ENCODE measurements at regions of chr3 and their contacts with region 1.

Region 1: DNA sequence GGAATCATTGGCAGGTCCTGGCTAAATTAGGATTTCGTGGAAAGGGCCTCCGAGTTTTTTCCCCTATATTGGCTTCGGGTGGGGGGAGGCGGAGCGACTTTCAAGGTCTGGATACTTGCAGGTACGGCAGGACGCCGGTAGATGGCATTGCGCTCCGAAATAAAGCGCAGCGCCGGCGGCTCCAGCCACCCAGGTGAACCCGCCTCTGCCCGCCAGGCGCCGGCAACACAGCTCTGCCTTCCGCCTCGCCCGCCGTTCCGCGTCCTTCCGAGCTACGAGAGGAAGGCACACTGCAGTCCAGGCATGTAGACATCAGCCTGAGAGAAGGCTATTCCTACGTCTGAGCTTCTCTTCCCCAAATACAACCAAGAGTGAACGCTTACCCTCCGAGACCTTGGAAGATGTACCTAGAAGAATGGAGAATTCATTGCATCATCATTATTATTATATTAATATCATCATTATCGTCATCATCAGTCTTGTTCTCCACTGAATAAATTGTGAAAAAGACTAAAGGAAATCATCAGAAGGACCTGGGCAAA is 514.1 kb downstream of the MECOM start:
- DNase-seq: peak; percentile 86
- H3K4me3 Mint-ChIP-seq: peak overlapping the region; percentile 81
- H3K27ac Mint-ChIP-seq: no peak overlapping the region
- H3K4me1 Mint-ChIP-seq: peaks cover 9% of the 10 kb centered on the region
- H3K27me3 Mint-ChIP-seq: no peaks in the 10 kb centered on the region
- CTCF ChIP-seq: peak; percentile 73

Region 2: GRCh38 chr3:169041677-169042171 is 107.7 kb before region 1 on chr3:
- CTCF ChIA-PET with region 1: interaction called, 28 read pairs
- POLR2A ChIA-PET with region 1: interaction called, 7 read pairs
- intact Hi-C with region 1: loop called (anchors 2 kb)
- DNase-seq: peak; percentile 46
- H3K4me3 Mint-ChIP-seq: no peak overlapping the region
- H3K27ac Mint-ChIP-seq: peak overlapping the region; percentile 7
- H3K4me1 Mint-ChIP-seq: no peaks in the 10 kb centered on the region
- H3K27me3 Mint-ChIP-seq: no peaks in the 10 kb centered on the region
- CTCF ChIP-seq: peak; percentile 42

Region 3: DNA sequence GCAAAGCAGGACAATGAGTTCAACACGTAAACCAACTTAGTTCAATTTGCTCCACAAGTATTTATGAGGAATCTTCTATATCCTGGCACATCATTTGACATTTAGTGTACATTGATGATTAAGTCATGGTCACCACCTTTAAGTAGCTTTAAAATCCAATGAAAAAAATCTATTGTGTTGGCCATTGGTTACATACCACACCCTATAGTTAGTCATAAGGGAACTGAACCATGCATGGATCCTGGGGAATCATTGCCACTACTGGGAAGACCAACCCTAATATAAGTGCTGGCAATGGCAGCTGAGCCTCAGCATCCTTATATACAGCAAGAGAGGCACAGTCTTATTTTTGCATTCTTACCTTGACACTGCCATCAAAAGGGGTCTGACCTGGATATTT is 11.6 kb after region 1 on chr3:
- CTCF ChIA-PET with region 1: interaction called, 15 read pairs
- POLR2A ChIA-PET with region 1: interaction called, 3 read pairs
- intact Hi-C with region 1: no loop called
- DNase-seq: no peak
- H3K4me3 Mint-ChIP-seq: no peak overlapping the region
- H3K27ac Mint-ChIP-seq: no peak overlapping the region
- H3K4me1 Mint-ChIP-seq: no peaks in the 10 kb centered on the region
- H3K27me3 Mint-ChIP-seq: no peaks in the 10 kb centered on the region
- CTCF ChIP-seq: no peak

Region 4: DNA sequence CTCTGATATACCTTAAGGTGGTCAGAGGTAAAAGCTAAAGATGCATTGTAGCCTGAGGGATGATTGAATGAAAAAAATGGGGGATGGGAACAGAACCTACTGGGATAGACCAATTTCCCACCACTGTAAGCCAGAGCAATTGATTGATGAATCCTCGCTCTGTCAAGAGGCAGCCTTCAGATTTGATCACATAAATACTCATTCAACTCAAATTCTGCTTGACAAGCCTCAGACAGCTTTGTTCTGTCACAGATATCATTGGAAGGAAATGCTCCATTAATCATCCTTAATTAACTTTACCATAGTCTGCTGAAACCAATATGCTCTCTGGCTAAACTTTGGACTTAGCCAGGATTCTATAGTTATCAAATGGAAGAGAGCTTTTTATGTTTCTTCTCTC is 46.3 kb after region 1 on chr3:
- CTCF ChIA-PET with region 1: no interaction called
- POLR2A ChIA-PET with region 1: no interaction called
- intact Hi-C with region 1: no loop called
- DNase-seq: no peak
- H3K4me3 Mint-ChIP-seq: no peak overlapping the region
- H3K27ac Mint-ChIP-seq: no peak overlapping the region
- H3K4me1 Mint-ChIP-seq: no peaks in the 10 kb centered on the region
- H3K27me3 Mint-ChIP-seq: no peaks in the 10 kb centered on the region
- CTCF ChIP-seq: no peak

Region 5: GRCh38 chr3:169250000-169250399 is 100.6 kb after region 1 on chr3:
- CTCF ChIA-PET with region 1: no interaction called
- POLR2A ChIA-PET with region 1: no interaction called
- intact Hi-C with region 1: no loop called
- DNase-seq: no peak
- H3K4me3 Mint-ChIP-seq: no peak overlapping the region
- H3K27ac Mint-ChIP-seq: no peak overlapping the region
- H3K4me1 Mint-ChIP-seq: no peaks in the 10 kb centered on the region
- H3K27me3 Mint-ChIP-seq: no peaks in the 10 kb centered on the region
- CTCF ChIP-seq: no peak

Region 6: GRCh38 chr3:169295126-169295525 is 145.7 kb after region 1 on chr3:
- CTCF ChIA-PET with region 1: interaction called, 14 read pairs
- POLR2A ChIA-PET with region 1: interaction called, 4 read pairs
- intact Hi-C with region 1: loop called (anchors 1 kb)
- DNase-seq: peak; percentile 33
- H3K4me3 Mint-ChIP-seq: no peak overlapping the region
- H3K27ac Mint-ChIP-seq: no peak overlapping the region
- H3K4me1 Mint-ChIP-seq: no peaks in the 10 kb centered on the region
- H3K27me3 Mint-ChIP-seq: no peaks in the 10 kb centered on the region
- CTCF ChIP-seq: peak; percentile 52

Region 7: GRCh38 chr3:169575373-169575772 is 426.0 kb after region 1 on chr3:
- CTCF ChIA-PET with region 1: interaction called, 3 read pairs
- POLR2A ChIA-PET with region 1: no interaction called
- intact Hi-C with region 1: loop called (anchors 5 kb)
- DNase-seq: peak; percentile 74
- H3K4me3 Mint-ChIP-seq: peak overlapping the region; percentile 22
- H3K27ac Mint-ChIP-seq: no peak overlapping the region
- H3K4me1 Mint-ChIP-seq: peaks cover 8% of the 10 kb centered on the region
- H3K27me3 Mint-ChIP-seq: no peaks in the 10 kb centered on the region
- CTCF ChIP-seq: no peak

Region 8: DNA sequence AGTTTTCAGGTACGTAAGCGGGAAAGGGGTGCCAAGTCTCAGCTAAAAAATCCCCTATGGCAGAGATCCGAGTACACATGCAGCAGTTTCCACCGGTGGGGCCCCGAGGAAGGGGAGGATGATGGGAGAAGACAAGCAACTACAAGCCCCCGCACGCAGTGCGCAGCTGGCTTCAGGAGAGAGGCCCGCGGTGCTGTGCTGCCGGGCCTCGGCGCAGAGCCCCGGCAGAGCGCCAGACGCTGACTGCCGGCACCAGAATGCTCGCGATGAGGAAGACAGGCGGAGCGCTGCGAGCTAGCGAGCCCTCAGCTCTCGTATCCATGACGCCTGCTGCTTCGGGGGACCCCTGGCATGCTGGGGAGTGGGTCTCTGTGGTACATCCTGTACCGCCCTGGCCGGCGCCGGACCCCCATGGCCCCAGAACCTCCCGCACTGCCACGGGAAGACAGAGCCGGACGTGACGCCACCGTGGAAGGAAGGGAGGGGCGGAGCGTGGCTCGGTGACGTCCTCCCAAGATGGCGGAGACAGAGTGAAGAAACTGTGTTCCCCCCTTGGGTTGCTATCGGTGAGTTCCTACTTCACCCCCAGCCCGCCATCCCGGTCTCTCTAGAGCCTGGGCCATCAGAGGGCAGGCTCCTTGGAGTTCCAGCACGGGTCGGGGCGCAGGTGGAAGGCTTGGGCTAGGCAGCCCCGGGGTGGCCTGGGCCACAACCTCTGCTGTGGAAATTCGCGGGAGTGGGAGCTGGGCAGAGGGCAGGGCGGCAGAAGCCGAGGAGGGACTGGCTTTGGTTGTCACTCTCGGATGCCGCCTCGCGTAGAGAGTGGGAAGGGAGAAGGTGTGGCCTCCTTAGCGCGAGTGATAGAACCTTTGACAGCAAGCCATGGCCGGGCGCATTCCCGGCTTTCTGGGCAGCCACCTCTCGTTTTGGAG is 623.7 kb after region 1 on chr3 and contains the start of gene MYNN:
- CTCF ChIA-PET with region 1: interaction called, 5 read pairs
- POLR2A ChIA-PET with region 1: interaction called, 21 read pairs
- intact Hi-C with region 1: loop called (anchors 5 kb)
- DNase-seq: peak; percentile 87
- H3K4me3 Mint-ChIP-seq: peak within 1 kb of the TSS; percentile 94
- H3K27ac Mint-ChIP-seq: peak within 1 kb of the TSS; percentile 99
- H3K4me1 Mint-ChIP-seq: peaks cover 4% of the 10 kb centered on the region
- H3K27me3 Mint-ChIP-seq: no peaks in the 10 kb centered on the region
- CTCF ChIP-seq: no peak
- total RNA-seq, gene MYNN: 18.0 and 20.4 TPM in 2 replicates